ENCODE measurements at regions of chr1 and their contacts with region 1.

Region 1: GRCh38 chr1:35726450-35727433 is 8.1 kb upstream of the C1orf216 start:
- DNase-seq: peak; percentile 62
- ATAC-seq: peak; percentile 87
- H3K4me3 Mint-ChIP-seq: no peak overlapping the region
- H3K27ac Mint-ChIP-seq: no peak overlapping the region
- H3K4me1 Mint-ChIP-seq: peaks cover 3% of the 10 kb centered on the region
- H3K27me3 Mint-ChIP-seq: no peaks in the 10 kb centered on the region

Region 2: GRCh38 chr1:35577071-35577998 is 149.4 kb before region 1 on chr1:
- CTCF ChIA-PET with region 1: interaction called, 21 read pairs
- POLR2A ChIA-PET with region 1: interaction called, 3 read pairs
- DNase-seq: peak; percentile 85
- ATAC-seq: peak; percentile 87
- H3K4me3 Mint-ChIP-seq: peak overlapping the region; percentile 81
- H3K27ac Mint-ChIP-seq: peak overlapping the region; percentile 94
- H3K4me1 Mint-ChIP-seq: peaks cover 34% of the 10 kb centered on the region
- H3K27me3 Mint-ChIP-seq: peaks cover 8% of the 10 kb centered on the region

Region 3: GRCh38 chr1:35737120-35737519 is 10.4 kb after region 1 on chr1:
- CTCF ChIA-PET with region 1: interaction called, 29 read pairs
- POLR2A ChIA-PET with region 1: no interaction called
- DNase-seq: no peak
- ATAC-seq: no peak
- H3K4me3 Mint-ChIP-seq: no peak overlapping the region
- H3K27ac Mint-ChIP-seq: no peak overlapping the region
- H3K4me1 Mint-ChIP-seq: no peaks in the 10 kb centered on the region
- H3K27me3 Mint-ChIP-seq: no peaks in the 10 kb centered on the region

Region 4: GRCh38 chr1:35745124-35745730 is 18.5 kb after region 1 on chr1:
- CTCF ChIA-PET with region 1: interaction called, 11 read pairs
- POLR2A ChIA-PET with region 1: no interaction called
- DNase-seq: no peak
- ATAC-seq: no peak
- H3K4me3 Mint-ChIP-seq: no peak overlapping the region
- H3K27ac Mint-ChIP-seq: no peak overlapping the region
- H3K4me1 Mint-ChIP-seq: no peaks in the 10 kb centered on the region
- H3K27me3 Mint-ChIP-seq: no peaks in the 10 kb centered on the region

Region 5: DNA sequence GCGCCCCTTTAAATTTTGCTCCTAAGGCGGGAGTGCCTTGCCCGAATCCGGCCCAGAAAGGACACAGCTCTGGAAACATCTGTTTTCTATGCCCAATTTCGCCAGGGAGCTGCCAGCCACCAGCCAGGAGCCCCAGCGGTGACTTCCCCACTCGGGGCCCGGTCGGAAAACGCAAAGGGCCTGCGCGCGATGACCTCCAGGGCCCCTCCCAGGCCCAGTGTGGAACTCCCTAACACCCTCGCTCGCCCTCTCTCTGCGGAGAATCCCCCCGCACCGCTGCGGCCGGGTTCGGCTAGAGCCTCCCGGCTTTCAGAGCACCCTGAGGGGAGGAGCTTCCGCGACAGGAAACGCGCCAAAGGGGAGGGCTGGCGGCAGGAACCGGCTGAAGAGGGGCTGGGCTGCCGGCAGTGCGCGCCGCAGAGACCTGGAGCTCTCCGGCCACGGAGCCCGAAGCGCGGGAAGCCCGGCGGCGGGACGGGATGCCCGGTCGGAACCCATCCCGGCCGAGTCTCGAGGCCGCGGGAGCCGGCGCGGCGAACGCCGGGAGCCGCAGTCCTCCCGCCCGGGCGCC is 42.5 kb after region 1 on chr1:
- CTCF ChIA-PET with region 1: interaction called, 43 read pairs
- POLR2A ChIA-PET with region 1: interaction called, 11 read pairs
- DNase-seq: peak; percentile 93
- ATAC-seq: peak; percentile 87
- H3K4me3 Mint-ChIP-seq: peak overlapping the region; percentile 97
- H3K27ac Mint-ChIP-seq: peak overlapping the region; percentile 84
- H3K4me1 Mint-ChIP-seq: peaks cover 27% of the 10 kb centered on the region
- H3K27me3 Mint-ChIP-seq: no peaks in the 10 kb centered on the region

Region 6: DNA sequence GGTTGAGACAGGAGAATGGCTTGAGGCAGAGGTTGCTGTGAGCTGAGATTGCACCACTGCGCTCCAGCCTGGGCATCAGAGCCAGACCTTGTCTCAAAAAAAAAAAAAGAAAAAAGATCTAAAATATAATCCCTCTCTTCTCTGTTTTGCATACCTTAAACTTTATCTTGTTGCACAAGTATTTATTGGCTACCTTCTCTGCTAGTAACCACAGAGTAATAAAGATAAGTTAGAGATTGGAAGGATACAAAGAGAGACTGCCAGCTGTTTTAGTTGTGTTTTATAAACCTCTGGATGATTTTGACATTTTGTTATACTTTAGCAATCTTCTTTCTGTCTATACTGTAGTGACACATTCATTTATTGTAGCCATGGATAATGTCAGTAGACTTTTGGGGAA is 231.8 kb after region 1 on chr1:
- CTCF ChIA-PET with region 1: no interaction called
- POLR2A ChIA-PET with region 1: no interaction called
- DNase-seq: no peak
- ATAC-seq: no peak
- H3K4me3 Mint-ChIP-seq: no peak overlapping the region
- H3K27ac Mint-ChIP-seq: no peak overlapping the region
- H3K4me1 Mint-ChIP-seq: no peaks in the 10 kb centered on the region
- H3K27me3 Mint-ChIP-seq: no peaks in the 10 kb centered on the region

Measured in activated CD8-positive, alpha-beta T cell treated with anti-CD3 and anti-CD28 coated beads, Interleukin-2, amount 10 ng/mL, durations not matched to agents 7 days and 5 days (primary cell).